Activated CD8-positive, alpha-beta T cell treated with anti-CD3 and anti-CD28 coated beads for 36 hours (primary cell): ENCODE measurements at regions of chrX and their contacts with region 1.

Region 1: GRCh38 chrX:109732780-109733657 is at the start of gene ACSL4:
- DNase-seq: peak; percentile 86
- ATAC-seq: peak; percentile 78
- H3K4me3 Mint-ChIP-seq: peak within 1 kb of the TSS; percentile 98
- H3K27ac Mint-ChIP-seq: peak within 1 kb of the TSS; percentile 100
- H3K4me1 Mint-ChIP-seq: peaks cover 26% of the 10 kb centered on the region
- H3K27me3 Mint-ChIP-seq: no peaks in the 10 kb centered on the region
- CTCF ChIP-seq: no peak
- total RNA-seq, gene ACSL4: 63.1 to 64.0 TPM

Region 2: GRCh38 chrX:109709129-109709631 is 23.8 kb before region 1 on chrX:
- CTCF ChIA-PET with region 1: interaction called, 14 read pairs
- POLR2A ChIA-PET with region 1: no interaction called
- intact Hi-C with region 1: no loop called
- DNase-seq: no peak
- ATAC-seq: peak; percentile 58
- H3K4me3 Mint-ChIP-seq: peak overlapping the region; percentile 24
- H3K27ac Mint-ChIP-seq: peak overlapping the region; percentile 86
- H3K4me1 Mint-ChIP-seq: peaks cover 76% of the 10 kb centered on the region
- H3K27me3 Mint-ChIP-seq: no peaks in the 10 kb centered on the region
- CTCF ChIP-seq: no peak

Region 3: GRCh38 chrX:109782994-109783700 is 50.1 kb after region 1 on chrX:
- CTCF ChIA-PET with region 1: no interaction called
- POLR2A ChIA-PET with region 1: interaction called, 7 read pairs
- intact Hi-C with region 1: loop called (anchors 5 kb)
- DNase-seq: peak; percentile 37
- ATAC-seq: peak; percentile 84
- H3K4me3 Mint-ChIP-seq: peak overlapping the region; percentile 66
- H3K27ac Mint-ChIP-seq: peak overlapping the region; percentile 95
- H3K4me1 Mint-ChIP-seq: peaks cover 18% of the 10 kb centered on the region
- H3K27me3 Mint-ChIP-seq: no peaks in the 10 kb centered on the region
- CTCF ChIP-seq: no peak

Region 4: GRCh38 chrX:109840585-109840984 is 107.6 kb after region 1 on chrX:
- CTCF ChIA-PET with region 1: no interaction called
- POLR2A ChIA-PET with region 1: interaction called, 3 read pairs
- intact Hi-C with region 1: loop called (anchors 5 kb)
- DNase-seq: peak; percentile 17
- ATAC-seq: peak; percentile 55
- H3K4me3 Mint-ChIP-seq: no peak overlapping the region
- H3K27ac Mint-ChIP-seq: no peak overlapping the region
- H3K4me1 Mint-ChIP-seq: peaks cover 8% of the 10 kb centered on the region
- H3K27me3 Mint-ChIP-seq: no peaks in the 10 kb centered on the region
- CTCF ChIP-seq: no peak